CD4-positive, alpha-beta T cell (primary cell): ENCODE measurements at regions of chr9 and their contacts with region 1.

Region 1: GRCh38 chr9:79104216-79104615 is 467.5 kb upstream of the TLE4 start:
- DNase-seq: no peak
- ATAC-seq: no peak
- H3K4me3 ChIP-seq: no peak overlapping the region
- H3K4me3 Mint-ChIP-seq: no peak overlapping the region
- H3K27ac ChIP-seq: no peak overlapping the region
- H3K27ac Mint-ChIP-seq: no peak overlapping the region
- H3K4me1 ChIP-seq: no peaks in the 10 kb centered on the region
- H3K4me1 Mint-ChIP-seq: no peaks in the 10 kb centered on the region
- H3K27me3 ChIP-seq: no peaks in the 10 kb centered on the region
- H3K27me3 Mint-ChIP-seq: no peaks in the 10 kb centered on the region
- CTCF ChIP-seq: no peak

Region 2: GRCh38 chr9:79080536-79080935 is 23.7 kb before region 1 on chr9:
- CTCF ChIA-PET with region 1: no interaction called
- POLR2A ChIA-PET with region 1: no interaction called
- intact Hi-C with region 1: no loop called
- DNase-seq: no peak
- ATAC-seq: no peak
- H3K4me3 ChIP-seq: no peak overlapping the region
- H3K4me3 Mint-ChIP-seq: no peak overlapping the region
- H3K27ac ChIP-seq: no peak overlapping the region
- H3K27ac Mint-ChIP-seq: no peak overlapping the region
- H3K4me1 ChIP-seq: no peaks in the 10 kb centered on the region
- H3K4me1 Mint-ChIP-seq: no peaks in the 10 kb centered on the region
- H3K27me3 ChIP-seq: no peaks in the 10 kb centered on the region
- H3K27me3 Mint-ChIP-seq: no peaks in the 10 kb centered on the region
- CTCF ChIP-seq: no peak

Region 3: DNA sequence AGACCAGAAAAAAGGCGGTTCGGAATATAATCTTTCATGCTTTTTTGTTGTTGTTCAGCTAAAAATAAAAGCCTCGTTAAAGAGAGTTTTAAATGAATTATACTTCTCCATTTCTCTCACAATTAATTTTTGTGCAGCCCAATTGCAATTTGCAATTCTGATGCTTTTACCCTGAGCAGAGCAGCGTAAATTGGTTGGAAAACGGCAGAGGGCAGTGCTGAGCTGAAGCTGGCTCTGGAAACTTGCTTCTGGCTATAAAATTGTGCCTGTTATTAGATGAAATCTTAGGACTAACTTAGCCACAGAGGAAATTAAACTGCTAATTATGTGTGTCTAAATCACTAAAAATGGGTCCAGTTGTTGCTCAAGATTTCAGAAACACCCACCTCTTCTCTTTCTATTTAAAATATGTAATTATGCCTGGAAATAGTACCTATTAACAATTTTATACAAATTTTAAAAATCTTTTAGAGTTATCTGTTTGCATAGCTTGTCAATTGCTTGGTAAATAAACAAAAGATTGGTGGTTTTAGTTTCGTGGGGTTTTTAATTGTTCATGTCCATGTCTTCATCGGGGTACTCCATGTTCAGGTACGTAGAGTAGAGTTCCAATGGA is 25.8 kb after region 1 on chr9:
- CTCF ChIA-PET with region 1: no interaction called
- POLR2A ChIA-PET with region 1: no interaction called
- intact Hi-C with region 1: loop called in 1 of 2 experiments (anchors 2 kb)
- DNase-seq: peak in 3 of 14 experiments; percentile 8 to 12 (median 11)
- ATAC-seq: no peak
- H3K4me3 ChIP-seq: no peak overlapping the region
- H3K4me3 Mint-ChIP-seq: no peak overlapping the region
- H3K27ac ChIP-seq: no peak overlapping the region
- H3K27ac Mint-ChIP-seq: no peak overlapping the region
- H3K4me1 ChIP-seq: no peaks in the 10 kb centered on the region
- H3K4me1 Mint-ChIP-seq: no peaks in the 10 kb centered on the region
- H3K27me3 ChIP-seq: no peaks in the 10 kb centered on the region
- H3K27me3 Mint-ChIP-seq: no peaks in the 10 kb centered on the region
- CTCF ChIP-seq: peak; percentile 29

Region 4: GRCh38 chr9:79165019-79165780 is 61.0 kb after region 1 on chr9:
- CTCF ChIA-PET with region 1: no interaction called
- POLR2A ChIA-PET with region 1: no interaction called
- intact Hi-C with region 1: no loop called
- DNase-seq: no peak
- ATAC-seq: no peak
- H3K4me3 ChIP-seq: no peak overlapping the region
- H3K4me3 Mint-ChIP-seq: no peak overlapping the region
- H3K27ac ChIP-seq: no peak overlapping the region
- H3K27ac Mint-ChIP-seq: no peak overlapping the region
- H3K4me1 ChIP-seq: no peaks in the 10 kb centered on the region
- H3K4me1 Mint-ChIP-seq: no peaks in the 10 kb centered on the region
- H3K27me3 ChIP-seq: no peaks in the 10 kb centered on the region
- H3K27me3 Mint-ChIP-seq: peaks cover 18% of the 10 kb centered on the region
- CTCF ChIP-seq: no peak